ENCODE measurements at regions of chr7 and their contacts with region 1.

Region 1: DNA sequence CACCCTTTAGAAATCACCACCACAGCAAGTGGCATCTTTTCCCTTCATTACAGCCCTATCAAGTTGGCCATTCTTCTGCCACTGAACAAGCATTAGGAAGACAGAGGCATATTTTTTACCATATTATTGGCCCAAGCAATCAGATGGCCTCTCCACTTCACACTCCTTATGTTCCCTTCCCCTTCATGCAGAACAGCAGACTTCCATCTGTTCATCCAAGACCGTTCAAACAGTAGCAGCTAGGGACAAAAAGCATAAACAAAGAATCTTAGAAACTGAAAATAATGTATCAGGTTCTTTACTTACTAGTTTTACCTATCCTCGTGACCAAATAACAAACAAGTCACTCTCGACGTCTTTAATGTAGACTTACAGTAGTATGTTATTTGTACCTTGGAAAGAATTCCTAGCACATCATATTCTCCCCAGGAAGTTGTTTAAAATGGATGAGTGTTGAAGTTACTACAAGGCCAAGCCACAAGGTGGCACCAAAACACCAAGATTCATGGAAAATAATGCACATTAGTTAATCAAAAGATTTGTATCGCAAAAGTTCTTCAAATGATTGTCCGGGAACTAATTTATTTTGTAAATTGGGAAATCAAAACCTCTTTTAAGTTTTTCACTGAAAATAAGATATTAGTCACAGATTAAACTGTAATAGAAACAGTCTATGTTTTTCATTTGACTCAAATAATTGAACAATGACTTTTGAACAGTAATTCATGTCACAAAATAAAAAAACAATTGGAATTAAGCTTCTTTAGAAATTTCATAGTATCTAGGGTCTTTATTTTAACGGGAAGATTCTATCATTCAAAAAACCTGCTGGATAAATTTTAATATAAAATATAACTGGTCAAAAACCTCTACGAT is 112.1 kb downstream of the VPS41 start:
- DNase-seq: peak; percentile 66
- H3K4me3 Mint-ChIP-seq: no peak overlapping the region
- H3K27ac Mint-ChIP-seq: no peak overlapping the region
- H3K4me1 Mint-ChIP-seq: no peaks in the 10 kb centered on the region
- H3K27me3 Mint-ChIP-seq: no peaks in the 10 kb centered on the region

Region 2: DNA sequence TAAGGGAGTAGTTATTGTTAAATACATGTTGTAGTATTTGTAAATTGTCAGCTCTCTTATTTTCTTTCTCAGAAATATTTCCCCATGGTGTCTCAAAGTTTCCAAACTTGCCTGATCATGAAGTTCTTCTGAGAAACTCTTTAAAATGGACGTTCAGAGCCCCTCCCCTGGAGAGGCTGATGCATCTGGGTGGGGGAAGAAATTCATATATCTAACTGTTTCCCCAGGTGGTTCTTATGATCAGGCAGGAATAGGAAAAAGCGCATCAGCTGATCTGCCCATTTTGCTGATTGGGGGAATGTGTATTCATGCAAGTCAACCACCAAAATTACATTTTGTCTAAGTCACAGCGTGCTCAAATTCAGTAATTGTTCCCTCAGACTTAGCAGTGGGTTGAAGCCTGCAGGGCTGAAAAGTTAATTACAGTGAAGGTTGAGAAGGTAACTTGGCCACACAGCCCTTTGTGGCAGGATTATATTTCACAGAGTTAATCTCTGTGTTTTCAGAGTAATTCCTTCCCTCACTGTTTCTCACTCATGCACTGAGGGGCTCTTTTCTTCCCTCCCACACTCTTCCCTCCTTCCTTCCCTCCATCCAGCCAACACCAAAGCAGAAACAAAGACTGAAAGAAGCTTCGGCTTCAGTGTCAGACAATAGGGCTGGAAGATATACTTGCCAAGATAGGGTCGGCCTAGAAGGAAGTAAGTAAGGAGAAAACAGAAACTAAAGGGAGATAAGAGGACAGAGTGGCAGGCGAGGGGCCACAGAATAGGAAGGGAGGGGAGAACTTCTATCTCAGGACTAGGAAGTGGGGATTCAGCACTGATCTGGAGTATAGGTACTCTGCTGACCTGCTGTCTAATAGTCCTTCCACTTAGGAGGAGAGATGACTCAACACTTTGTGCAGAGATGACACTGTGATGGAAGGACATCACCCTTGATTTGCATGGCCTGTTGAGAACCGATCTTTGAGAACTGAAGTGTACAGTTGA is 669.4 kb before region 1 on chr7:
- CTCF ChIA-PET with region 1: no interaction called
- intact Hi-C with region 1: no loop called
- DNase-seq: no peak
- H3K4me3 Mint-ChIP-seq: no peak overlapping the region
- H3K27ac Mint-ChIP-seq: no peak overlapping the region
- H3K4me1 Mint-ChIP-seq: peaks cover 3% of the 10 kb centered on the region
- H3K27me3 Mint-ChIP-seq: peaks cover 7% of the 10 kb centered on the region

Region 3: GRCh38 chr7:38160003-38160571 is 636.8 kb before region 1 on chr7:
- CTCF ChIA-PET with region 1: no interaction called
- intact Hi-C with region 1: no loop called
- DNase-seq: no peak
- H3K4me3 Mint-ChIP-seq: no peak overlapping the region
- H3K27ac Mint-ChIP-seq: no peak overlapping the region
- H3K4me1 Mint-ChIP-seq: no peaks in the 10 kb centered on the region
- H3K27me3 Mint-ChIP-seq: peaks cover 4% of the 10 kb centered on the region

Region 4: DNA sequence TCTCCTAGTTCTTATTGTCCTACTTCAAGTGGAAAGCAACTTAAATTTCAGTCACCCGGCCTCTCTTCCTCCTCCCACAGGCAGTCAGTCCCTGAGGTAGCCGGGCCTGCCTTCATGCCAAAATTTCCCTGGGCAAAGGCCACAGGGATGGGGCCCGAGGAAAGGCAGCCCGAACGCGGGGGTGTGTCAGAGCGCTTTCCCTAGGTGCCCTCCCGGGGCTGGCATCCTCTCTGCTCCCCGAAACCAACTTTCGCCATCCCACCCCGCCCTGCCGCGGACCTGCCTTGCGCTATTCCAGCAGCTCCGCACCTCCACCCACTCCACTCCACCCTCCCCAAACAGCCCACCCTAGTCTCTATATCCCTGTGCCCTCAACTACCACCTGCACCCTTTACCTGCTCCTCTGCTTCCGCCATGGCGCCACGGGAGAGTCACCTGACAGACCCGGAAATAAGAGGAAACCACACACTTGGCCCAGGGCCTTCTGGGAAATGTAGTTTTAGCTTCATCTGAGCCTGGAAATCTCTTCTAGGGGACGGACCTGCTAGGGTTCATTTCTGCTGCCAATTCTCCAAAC is 112.0 kb after region 1 on chr7 and contains the start of gene VPS41:
- CTCF ChIA-PET with region 1: no interaction called
- intact Hi-C with region 1: loop called (anchors 2 kb)
- DNase-seq: peak; percentile 87
- H3K4me3 Mint-ChIP-seq: peak within 1 kb of the TSS; percentile 91
- H3K27ac Mint-ChIP-seq: peak within 1 kb of the TSS; percentile 72
- H3K4me1 Mint-ChIP-seq: peaks cover 40% of the 10 kb centered on the region
- H3K27me3 Mint-ChIP-seq: no peaks in the 10 kb centered on the region
- total RNA-seq, gene VPS41: 51.1 to 57.8 TPM

Region 5: DNA sequence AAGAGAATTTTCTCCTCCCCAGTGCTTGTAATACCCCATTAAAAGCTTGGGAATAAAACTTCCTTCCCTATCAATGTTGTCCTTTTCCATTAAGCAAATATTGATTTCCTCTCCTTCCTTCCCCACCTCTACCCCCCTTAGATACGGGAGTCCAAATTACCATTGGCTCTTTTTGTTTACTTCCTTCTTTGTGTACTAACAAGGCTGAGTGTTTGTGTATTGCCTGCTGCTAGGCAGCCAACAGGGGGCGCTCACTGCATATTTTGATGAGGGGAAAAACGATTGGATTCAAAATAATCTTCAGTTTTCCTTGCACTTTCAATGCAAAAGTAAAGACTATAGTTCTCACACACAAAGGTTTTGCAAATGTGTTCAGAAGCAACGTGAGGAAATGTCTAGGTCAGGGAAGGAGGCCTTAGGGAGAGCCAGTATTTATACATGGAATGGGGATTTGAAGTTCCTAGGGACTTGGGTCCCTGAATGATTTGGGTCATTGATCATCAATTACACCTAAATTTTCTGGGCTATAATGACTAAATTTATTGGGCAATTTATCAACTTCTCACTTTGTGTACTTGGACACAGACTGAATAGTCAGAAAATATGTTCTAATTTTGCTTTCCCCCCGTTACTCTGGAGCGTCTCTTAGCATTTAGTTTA is 135.8 kb after region 1 on chr7:
- CTCF ChIA-PET with region 1: no interaction called
- intact Hi-C with region 1: loop called (anchors 5 kb)
- DNase-seq: peak; percentile 70
- H3K4me3 Mint-ChIP-seq: no peak overlapping the region
- H3K27ac Mint-ChIP-seq: no peak overlapping the region
- H3K4me1 Mint-ChIP-seq: no peaks in the 10 kb centered on the region
- H3K27me3 Mint-ChIP-seq: no peaks in the 10 kb centered on the region

Region 6: GRCh38 chr7:39353615-39354376 is 556.9 kb after region 1 on chr7:
- CTCF ChIA-PET with region 1: no interaction called
- intact Hi-C with region 1: loop called (anchors 10 kb)
- DNase-seq: no peak
- H3K4me3 Mint-ChIP-seq: no peak overlapping the region
- H3K27ac Mint-ChIP-seq: no peak overlapping the region
- H3K4me1 Mint-ChIP-seq: peaks cover 4% of the 10 kb centered on the region
- H3K27me3 Mint-ChIP-seq: no peaks in the 10 kb centered on the region

Region 7: GRCh38 chr7:39453743-39454355 is 657.0 kb after region 1 on chr7:
- CTCF ChIA-PET with region 1: interaction called, 4 read pairs
- intact Hi-C with region 1: loop called (anchors 5 kb)
- DNase-seq: peak; percentile 75
- H3K4me3 Mint-ChIP-seq: no peak overlapping the region
- H3K27ac Mint-ChIP-seq: no peak overlapping the region
- H3K4me1 Mint-ChIP-seq: no peaks in the 10 kb centered on the region
- H3K27me3 Mint-ChIP-seq: peaks cover 7% of the 10 kb centered on the region

Region 8: GRCh38 chr7:39465055-39465929 is 668.4 kb after region 1 on chr7:
- CTCF ChIA-PET with region 1: interaction called, 4 read pairs
- intact Hi-C with region 1: loop called (anchors 1 kb)
- DNase-seq: peak; percentile 75
- H3K4me3 Mint-ChIP-seq: no peak overlapping the region
- H3K27ac Mint-ChIP-seq: no peak overlapping the region
- H3K4me1 Mint-ChIP-seq: peaks cover 2% of the 10 kb centered on the region
- H3K27me3 Mint-ChIP-seq: peaks cover 13% of the 10 kb centered on the region

Region 9: GRCh38 chr7:39517240-39517639 is 720.4 kb after region 1 on chr7:
- CTCF ChIA-PET with region 1: interaction called, 3 read pairs
- intact Hi-C with region 1: loop called (anchors 1 kb)
- DNase-seq: no peak
- H3K4me3 Mint-ChIP-seq: no peak overlapping the region
- H3K27ac Mint-ChIP-seq: no peak overlapping the region
- H3K4me1 Mint-ChIP-seq: no peaks in the 10 kb centered on the region
- H3K27me3 Mint-ChIP-seq: peaks cover 3% of the 10 kb centered on the region